ENCODE measurements at regions of chr14 and their contacts with region 1.

Region 1: DNA sequence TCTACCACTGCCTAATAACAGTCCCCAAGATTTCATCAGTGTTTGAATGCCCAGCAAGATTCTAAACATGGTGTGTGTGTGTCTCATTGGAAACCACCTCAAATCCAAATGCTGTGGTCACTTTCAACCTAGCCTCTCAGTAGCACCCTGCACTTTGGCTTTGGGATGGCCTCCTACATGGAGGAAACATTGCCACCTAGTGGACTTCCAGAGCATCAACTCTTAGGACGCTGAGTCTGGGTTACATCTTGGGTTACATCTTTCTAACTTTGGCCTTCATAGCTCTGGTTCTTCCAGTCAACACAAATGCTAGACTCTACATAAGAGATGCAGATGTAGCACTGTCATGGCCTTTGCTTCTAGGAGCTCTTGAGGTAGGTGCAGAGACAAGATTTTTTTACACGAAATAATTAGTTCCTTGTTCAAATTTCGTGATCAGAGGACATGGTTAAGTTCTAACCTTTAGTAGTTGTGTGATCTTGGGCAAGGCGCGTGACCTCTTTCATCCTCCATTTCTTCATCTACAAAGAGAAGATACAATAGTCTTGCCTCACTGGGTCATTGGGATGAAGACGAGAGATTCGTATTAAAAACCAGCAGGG is 113.5 kb upstream of the VASH1 start:
- DNase-seq: peak in 1 of 10 donors; percentile 31

Region 2: GRCh38 chr14:76502638-76503037 is 145.2 kb before region 1 on chr14:
- intact Hi-C with region 1: no loop called
- DNase-seq: no peak

Region 3: GRCh38 chr14:76514613-76515012 is 133.2 kb before region 1 on chr14:
- intact Hi-C with region 1: loop called (anchors 10 kb)
- DNase-seq: no peak

Region 4: GRCh38 chr14:76814726-76815645 is 167.2 kb after region 1 on chr14:
- intact Hi-C with region 1: no loop called
- DNase-seq: no peak